Dendritic cell treated with granulocyte-macrophage colony-stimulating factor and Interleukin-4, amounts not matched to agents 40 ng/mL and 50 ng/mL, for 4 days (primary cell): ENCODE measurements at regions of chr4 and their contacts with region 1.

Region 1: DNA sequence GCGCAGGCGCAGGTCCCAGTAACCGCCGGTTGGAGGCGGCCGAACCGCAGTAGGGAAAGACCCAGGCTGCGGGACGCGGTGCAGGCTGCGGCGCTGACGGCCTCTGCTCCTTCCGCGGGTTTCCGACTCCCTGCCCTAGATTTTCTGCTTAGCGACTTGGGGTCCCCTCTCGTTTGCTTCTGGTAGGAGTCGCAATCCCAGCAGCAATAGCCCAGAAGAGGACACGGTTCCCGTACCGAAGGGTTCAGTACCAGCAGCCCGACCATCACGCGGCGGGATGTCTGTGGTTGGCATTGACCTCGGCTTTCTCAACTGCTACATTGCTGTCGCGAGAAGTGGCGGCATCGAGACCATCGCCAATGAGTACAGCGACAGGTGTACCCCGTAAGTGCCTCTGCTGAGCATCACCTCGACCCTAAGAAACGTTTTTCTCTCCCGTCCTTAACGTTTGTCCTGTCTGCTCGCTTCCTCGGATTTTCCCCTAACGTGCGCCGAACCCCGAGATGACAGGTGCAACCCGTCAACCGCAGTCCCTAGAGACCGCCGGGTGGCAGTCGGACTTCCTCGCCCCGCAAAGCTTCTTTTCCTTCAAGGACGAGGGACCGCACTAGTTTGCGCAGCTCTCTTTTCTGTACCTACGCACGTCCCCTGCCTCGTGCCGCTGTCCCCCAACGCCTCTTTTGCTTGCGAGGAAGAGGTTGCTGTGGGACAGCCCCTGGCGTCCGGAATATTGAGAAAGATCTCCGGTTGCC is at the start of gene HSPA4L:
- H3K4me3 Mint-ChIP-seq: peak within 1 kb of the TSS; percentile 82
- H3K27ac Mint-ChIP-seq: peak within 1 kb of the TSS; percentile 34
- H3K4me1 Mint-ChIP-seq: peaks cover 31% of the 10 kb centered on the region
- H3K27me3 Mint-ChIP-seq: peaks cover 45% of the 10 kb centered on the region

Region 2: DNA sequence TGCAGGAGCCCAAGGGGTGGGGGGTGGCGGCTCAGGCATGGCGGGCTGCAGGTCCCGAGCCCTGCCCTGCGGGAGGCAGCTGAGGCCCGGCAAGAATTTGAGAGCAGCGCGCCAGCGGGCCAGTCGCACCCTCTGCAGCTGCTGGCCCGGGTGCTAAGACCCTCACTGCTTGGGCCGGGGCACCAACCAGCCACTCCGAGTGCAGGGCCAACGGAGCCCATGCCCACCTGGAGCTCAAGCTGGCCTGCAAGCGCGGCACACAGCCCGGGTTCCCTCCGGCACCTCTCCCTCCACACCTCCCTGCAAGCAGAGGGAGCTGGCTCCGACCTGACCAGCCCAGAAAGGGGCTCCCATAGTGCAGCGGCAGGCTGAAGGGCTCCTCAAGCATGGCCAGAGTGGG is 907.9 kb before region 1 on chr4:
- intact Hi-C with region 1: no loop called
- H3K4me3 Mint-ChIP-seq: no peak overlapping the region
- H3K27ac Mint-ChIP-seq: no peak overlapping the region
- H3K4me1 Mint-ChIP-seq: no peaks in the 10 kb centered on the region
- H3K27me3 Mint-ChIP-seq: no peaks in the 10 kb centered on the region

Region 3: GRCh38 chr4:127604949-127605709 is 177.3 kb before region 1 on chr4:
- intact Hi-C with region 1: loop called (anchors 5 kb)
- H3K4me3 Mint-ChIP-seq: no peak overlapping the region
- H3K27ac Mint-ChIP-seq: no peak overlapping the region
- H3K4me1 Mint-ChIP-seq: no peaks in the 10 kb centered on the region
- H3K27me3 Mint-ChIP-seq: peaks cover 7% of the 10 kb centered on the region

Region 4: GRCh38 chr4:127632420-127633403 is 149.7 kb before region 1 on chr4 and contains the start of gene INTU:
- intact Hi-C with region 1: loop called (anchors 10 kb)
- H3K4me3 Mint-ChIP-seq: peak within 1 kb of the TSS; percentile 93
- H3K27ac Mint-ChIP-seq: peak within 1 kb of the TSS; percentile 86
- H3K4me1 Mint-ChIP-seq: peaks cover 17% of the 10 kb centered on the region
- H3K27me3 Mint-ChIP-seq: peaks cover 2% of the 10 kb centered on the region

Region 5: GRCh38 chr4:127880764-127881562 is 98.5 kb after region 1 on chr4 and contains the start of gene PLK4:
- intact Hi-C with region 1: loop called (anchors 2 kb)
- H3K4me3 Mint-ChIP-seq: peak within 1 kb of the TSS; percentile 95
- H3K27ac Mint-ChIP-seq: peak within 1 kb of the TSS; percentile 91
- H3K4me1 Mint-ChIP-seq: peaks cover 12% of the 10 kb centered on the region
- H3K27me3 Mint-ChIP-seq: no peaks in the 10 kb centered on the region

Region 6: GRCh38 chr4:127965062-127965802 is 182.8 kb after region 1 on chr4 and contains the starts of genes ABHD18 and MFSD8:
- intact Hi-C with region 1: loop called (anchors 5 kb)
- H3K4me3 Mint-ChIP-seq: peak within 1 kb of the TSS; percentile 96
- H3K27ac Mint-ChIP-seq: peak within 1 kb of the TSS; percentile 97
- H3K4me1 Mint-ChIP-seq: peaks cover 19% of the 10 kb centered on the region
- H3K27me3 Mint-ChIP-seq: no peaks in the 10 kb centered on the region

Region 7: GRCh38 chr4:128006592-128006991 is 224.1 kb after region 1 on chr4:
- intact Hi-C with region 1: no loop called
- H3K4me3 Mint-ChIP-seq: no peak overlapping the region
- H3K27ac Mint-ChIP-seq: no peak overlapping the region
- H3K4me1 Mint-ChIP-seq: no peaks in the 10 kb centered on the region
- H3K27me3 Mint-ChIP-seq: no peaks in the 10 kb centered on the region